ENCODE measurements at regions of chr15 and their contacts with region 1.

Region 1: DNA sequence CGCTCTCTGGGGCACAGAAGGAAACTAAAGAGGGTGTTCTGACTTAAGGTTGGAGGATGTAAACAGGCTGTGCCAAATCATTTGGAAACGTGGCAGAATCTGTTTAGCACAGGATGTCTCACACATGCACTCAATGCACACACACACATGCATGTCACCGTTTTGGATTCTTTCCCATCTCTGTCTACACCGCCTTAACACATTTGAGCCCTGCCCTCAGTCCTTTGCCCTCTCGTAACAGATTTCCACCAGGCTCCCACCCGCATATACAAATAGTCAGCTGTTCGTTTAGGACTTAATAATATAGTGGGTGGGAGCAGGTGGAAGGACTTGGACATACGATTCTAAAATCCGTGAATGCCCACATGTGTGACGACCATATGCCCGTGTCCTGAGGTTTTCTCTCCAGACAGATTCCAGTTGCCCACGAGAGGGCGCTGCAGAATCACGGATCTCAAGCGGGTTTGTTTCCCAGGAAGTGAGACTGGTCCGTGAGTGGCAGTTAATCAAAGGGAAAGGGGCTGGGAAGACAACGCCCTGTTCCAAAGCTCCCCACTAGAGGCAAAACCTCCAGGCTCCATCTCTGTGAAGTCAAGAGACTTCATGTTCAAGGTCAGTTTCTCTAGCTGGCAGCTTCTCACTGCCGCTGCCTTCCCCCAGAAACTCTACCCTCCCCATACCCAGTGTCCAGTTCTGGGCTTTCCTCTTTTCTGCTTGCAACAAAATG is 44.5 kb downstream of the NOX5 start:
- DNase-seq: peak; percentile 43 to 87 (median 70)
- ATAC-seq: no peak
- H3K4me3 ChIP-seq: no peak overlapping the region
- H3K4me3 Mint-ChIP-seq: peak overlapping the region; percentile 3
- H3K27ac ChIP-seq: no peak overlapping the region
- H3K27ac Mint-ChIP-seq: no peak overlapping the region
- H3K4me1 ChIP-seq: peaks cover 16% of the 10 kb centered on the region
- H3K4me1 Mint-ChIP-seq: peaks cover 30% of the 10 kb centered on the region
- H3K27me3 ChIP-seq: no peaks in the 10 kb centered on the region
- H3K27me3 Mint-ChIP-seq: peaks cover 7% of the 10 kb centered on the region
- CTCF ChIP-seq: peak; percentile 88

Region 2: GRCh38 chr15:69076756-69077155 is 17.8 kb after region 1 on chr15:
- CTCF ChIA-PET with region 1: interaction called, 12 read pairs
- POLR2A ChIA-PET with region 1: no interaction called
- intact Hi-C with region 1: no loop called
- DNase-seq: no peak
- ATAC-seq: no peak
- H3K4me3 ChIP-seq: no peak overlapping the region
- H3K4me3 Mint-ChIP-seq: no peak overlapping the region
- H3K27ac ChIP-seq: no peak overlapping the region
- H3K27ac Mint-ChIP-seq: no peak overlapping the region
- H3K4me1 ChIP-seq: no peaks in the 10 kb centered on the region
- H3K4me1 Mint-ChIP-seq: peaks cover 10% of the 10 kb centered on the region
- H3K27me3 ChIP-seq: peaks cover 0 to 4% of the 10 kb centered on the region in 2 experiments
- H3K27me3 Mint-ChIP-seq: peaks cover 39% of the 10 kb centered on the region
- CTCF ChIP-seq: no peak

Region 3: DNA sequence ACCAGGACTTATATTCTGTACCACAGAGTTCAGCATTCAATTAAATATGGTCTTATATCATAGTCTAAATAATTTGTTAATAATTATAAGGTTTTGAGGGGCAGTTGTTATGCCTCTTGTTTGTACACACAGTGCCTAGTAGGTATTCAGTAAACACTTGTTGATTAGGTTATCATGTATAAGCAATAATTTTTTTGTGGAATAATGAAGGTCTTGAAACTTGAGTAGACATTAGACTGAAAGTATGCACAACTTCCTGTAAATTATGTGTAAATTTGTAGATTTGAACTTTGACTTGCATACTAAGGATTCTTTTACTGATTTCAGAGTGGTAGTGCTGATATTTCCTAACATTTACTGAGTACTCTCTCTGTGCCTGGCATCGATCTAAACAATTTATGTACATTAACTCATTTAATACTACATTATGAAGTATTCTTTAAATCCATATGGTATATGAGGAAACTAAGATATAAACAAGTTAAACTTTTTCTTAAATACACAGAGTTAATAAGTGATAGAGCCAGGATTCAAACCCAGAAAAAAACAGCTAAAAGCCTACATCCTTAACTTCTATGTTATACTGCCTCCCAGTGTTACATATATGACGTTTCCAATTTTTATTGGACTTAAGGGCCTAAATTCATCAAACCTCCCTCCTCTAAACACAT is 166.5 kb after region 1 on chr15:
- CTCF ChIA-PET with region 1: interaction called, 7 read pairs
- POLR2A ChIA-PET with region 1: no interaction called
- intact Hi-C with region 1: loop called (anchors 1 to 10 kb)
- DNase-seq: peak in 1 of 9 experiments; percentile 17
- ATAC-seq: no peak
- H3K4me3 ChIP-seq: no peak overlapping the region
- H3K4me3 Mint-ChIP-seq: no peak overlapping the region
- H3K27ac ChIP-seq: no peak overlapping the region
- H3K27ac Mint-ChIP-seq: no peak overlapping the region
- H3K4me1 ChIP-seq: no peaks in the 10 kb centered on the region
- H3K4me1 Mint-ChIP-seq: no peaks in the 10 kb centered on the region
- H3K27me3 ChIP-seq: no peaks in the 10 kb centered on the region
- H3K27me3 Mint-ChIP-seq: no peaks in the 10 kb centered on the region
- CTCF ChIP-seq: no peak

Region 4: GRCh38 chr15:69388260-69388705 is 329.3 kb after region 1 on chr15:
- CTCF ChIA-PET with region 1: interaction called, 112 read pairs
- POLR2A ChIA-PET with region 1: no interaction called
- intact Hi-C with region 1: no loop called
- DNase-seq: no peak
- ATAC-seq: no peak
- H3K4me3 ChIP-seq: no peak overlapping the region
- H3K4me3 Mint-ChIP-seq: no peak overlapping the region
- H3K27ac ChIP-seq: no peak overlapping the region
- H3K27ac Mint-ChIP-seq: no peak overlapping the region
- H3K4me1 ChIP-seq: no peaks in the 10 kb centered on the region
- H3K4me1 Mint-ChIP-seq: no peaks in the 10 kb centered on the region
- H3K27me3 ChIP-seq: no peaks in the 10 kb centered on the region
- H3K27me3 Mint-ChIP-seq: peaks cover 2% of the 10 kb centered on the region
- CTCF ChIP-seq: no peak